Breast epithelium (tissue), 4 donors: ENCODE measurements at regions of chr15 and their contacts with region 1.

Region 1: DNA sequence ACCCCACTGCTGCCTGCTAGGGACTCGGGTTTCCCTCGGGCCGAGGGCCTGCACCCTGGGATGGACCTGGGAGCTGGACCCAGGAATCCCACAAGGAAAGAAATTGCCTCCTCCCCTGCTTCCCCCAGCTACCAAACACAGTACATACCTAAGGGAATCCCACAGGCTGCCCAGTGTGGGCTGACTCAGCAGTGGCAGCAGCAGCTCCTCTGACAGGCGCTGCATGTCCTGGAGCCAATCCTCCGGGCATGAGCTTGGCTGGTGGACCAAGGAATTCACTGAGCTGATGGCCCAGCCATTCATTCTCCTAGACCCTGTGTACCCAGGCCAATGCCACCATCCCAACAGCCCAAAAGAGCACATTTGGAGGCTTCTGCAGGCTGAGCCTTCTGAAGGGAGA is 9.5 kb upstream of the LTK start:
- DNase-seq: no peak
- H3K4me3 ChIP-seq: no peak overlapping the region
- H3K27ac ChIP-seq: no peak overlapping the region
- H3K4me1 ChIP-seq: no peaks in the 10 kb centered on the region
- H3K27me3 ChIP-seq: no peaks in the 10 kb centered on the region
- CTCF ChIP-seq: no peak
- POLR2A ChIP-seq: no peak

Region 2: GRCh38 chr15:39898317-39898716 is 1624.8 kb before region 1 on chr15:
- intact Hi-C with region 1: no loop called
- DNase-seq: no peak
- H3K4me3 ChIP-seq: no peak overlapping the region
- H3K27ac ChIP-seq: no peak overlapping the region
- H3K4me1 ChIP-seq: no peaks in the 10 kb centered on the region
- H3K27me3 ChIP-seq: no peaks in the 10 kb centered on the region
- CTCF ChIP-seq: no peak
- POLR2A ChIP-seq: no peak

Region 3: GRCh38 chr15:41512940-41513510 is 10.1 kb before region 1 on chr15:
- intact Hi-C with region 1: loop called (anchors 1 kb)
- DNase-seq: no peak
- H3K4me3 ChIP-seq: peak overlapping the region; percentile 26 to 56 (median 43)
- H3K27ac ChIP-seq: no peak overlapping the region
- H3K4me1 ChIP-seq: peaks cover 8 to 9% of the 10 kb centered on the region in 2 donors
- H3K27me3 ChIP-seq: peaks cover 9 to 32% of the 10 kb centered on the region in 2 donors
- CTCF ChIP-seq: no peak
- POLR2A ChIP-seq: no peak

Region 4: DNA sequence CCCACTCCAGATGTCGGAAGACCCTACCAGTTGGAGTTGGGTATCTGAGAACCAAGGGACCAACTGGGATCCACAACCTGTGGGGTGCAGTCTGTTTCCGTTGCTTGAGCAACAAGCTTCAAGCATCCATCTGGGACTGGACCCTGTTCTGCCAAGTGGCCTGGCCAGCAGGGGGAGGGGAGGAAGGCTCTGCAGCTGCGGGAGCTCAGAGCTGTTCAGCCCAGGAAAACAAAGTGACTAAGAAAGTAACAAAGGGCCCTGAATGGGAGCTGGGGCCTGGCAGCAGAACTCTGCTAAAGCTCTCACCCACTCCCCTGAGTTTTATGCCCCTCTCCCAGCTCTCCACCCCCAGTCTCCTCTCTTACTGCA is 38.7 kb after region 1 on chr15:
- intact Hi-C with region 1: no loop called
- DNase-seq: no peak
- H3K4me3 ChIP-seq: no peak overlapping the region
- H3K27ac ChIP-seq: peak overlapping the region in 1 of 2 donors; percentile 3
- H3K4me1 ChIP-seq: peaks cover 6 to 7% of the 10 kb centered on the region in 2 donors
- H3K27me3 ChIP-seq: no peaks in the 10 kb centered on the region
- CTCF ChIP-seq: no peak
- POLR2A ChIP-seq: no peak

Region 5: DNA sequence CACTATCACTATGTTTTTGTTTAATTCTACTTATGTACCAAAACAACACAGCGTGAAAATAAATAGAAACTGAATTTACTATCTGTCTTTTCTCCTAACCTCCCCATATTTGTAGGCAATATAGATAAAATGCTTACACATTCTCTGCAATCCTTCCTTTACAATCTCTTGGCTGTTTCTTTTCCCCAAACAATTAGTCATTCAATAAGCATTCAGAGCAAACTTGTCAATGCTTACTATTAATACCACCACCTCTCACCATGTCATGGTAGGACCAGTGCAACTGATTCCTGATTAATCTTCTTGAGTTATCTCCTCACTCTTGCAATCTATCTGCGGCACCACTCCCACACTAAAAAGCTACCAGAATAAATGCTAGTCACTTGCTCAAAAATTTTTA is 1471.4 kb after region 1 on chr15:
- intact Hi-C with region 1: no loop called
- DNase-seq: no peak
- H3K4me3 ChIP-seq: no peak overlapping the region
- H3K27ac ChIP-seq: no peak overlapping the region
- H3K4me1 ChIP-seq: no peaks in the 10 kb centered on the region
- H3K27me3 ChIP-seq: no peaks in the 10 kb centered on the region
- CTCF ChIP-seq: no peak
- POLR2A ChIP-seq: no peak